MCF 10A (cell line): ENCODE measurements at regions of chr17 and their contacts with region 1.

Region 1: DNA sequence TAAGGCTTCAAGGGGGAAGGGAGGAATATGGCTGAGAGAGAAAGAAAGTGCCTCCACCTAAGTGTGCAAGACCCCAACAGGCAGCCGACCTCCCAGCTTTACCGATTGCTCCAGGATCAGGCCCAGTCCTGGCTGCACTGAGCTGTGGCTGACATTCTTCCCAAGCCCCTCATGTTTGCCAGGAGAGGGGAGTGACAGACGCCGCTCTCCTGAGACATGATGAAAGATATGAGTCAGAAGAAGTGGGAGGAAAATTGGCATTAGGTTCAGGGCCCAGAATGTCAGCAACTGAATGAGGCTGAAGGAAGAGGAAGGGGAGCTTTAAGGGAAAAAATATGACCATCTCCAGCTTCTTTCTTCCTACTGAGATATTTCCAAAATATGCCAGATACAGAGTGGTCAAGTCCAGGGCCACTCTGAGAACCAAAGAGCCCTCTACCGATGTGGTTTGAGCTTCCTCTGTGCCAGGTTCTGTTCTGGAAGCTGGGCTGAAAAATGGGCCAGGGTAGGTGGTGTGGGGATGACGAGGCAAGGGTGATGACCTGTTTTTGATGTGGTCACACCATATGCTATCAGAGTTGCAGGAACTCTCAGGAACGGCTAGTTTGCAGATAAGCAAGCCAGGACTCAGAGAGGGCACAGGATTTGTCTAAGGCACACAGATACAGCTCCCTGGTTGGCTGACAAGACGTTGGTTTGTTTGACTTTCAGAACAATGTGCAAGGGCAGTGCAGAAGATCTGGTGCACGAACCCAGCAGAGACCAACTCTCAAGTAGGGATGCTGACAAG is 176.7 kb downstream of the SOX9 start:
- DNase-seq: peak; percentile 91
- H3K4me3 Mint-ChIP-seq: peak overlapping the region; percentile 37
- H3K27ac Mint-ChIP-seq: no peak overlapping the region
- H3K4me1 Mint-ChIP-seq: peaks cover 20% of the 10 kb centered on the region
- H3K27me3 Mint-ChIP-seq: no peaks in the 10 kb centered on the region
- CTCF ChIP-seq: no peak

Region 2: GRCh38 chr17:72273673-72274056 is 23.9 kb before region 1 on chr17:
- CTCF ChIA-PET with region 1: no interaction called
- POLR2A ChIA-PET with region 1: interaction called, 10 read pairs
- intact Hi-C with region 1: no loop called
- DNase-seq: peak; percentile 71
- H3K4me3 Mint-ChIP-seq: peak overlapping the region; percentile 17
- H3K27ac Mint-ChIP-seq: peak overlapping the region; percentile 64
- H3K4me1 Mint-ChIP-seq: peaks cover 18% of the 10 kb centered on the region
- H3K27me3 Mint-ChIP-seq: no peaks in the 10 kb centered on the region
- CTCF ChIP-seq: no peak